Activated CD4-positive, alpha-beta memory T cell treated with anti-CD3 and anti-CD28 coated beads for 36 hours (primary cell): ENCODE measurements at regions of chr10 and their contacts with region 1.

Region 1: GRCh38 chr10:110210674-110211464 is 3.5 kb downstream of the MXI1 start:
- DNase-seq: peak; percentile 96
- H3K4me3 Mint-ChIP-seq: peak overlapping the region; percentile 96
- H3K27ac Mint-ChIP-seq: peak overlapping the region; percentile 91
- H3K4me1 Mint-ChIP-seq: peaks cover 54% of the 10 kb centered on the region
- H3K27me3 Mint-ChIP-seq: peaks cover 1% of the 10 kb centered on the region

Region 2: GRCh38 chr10:109922976-109923921 is 287.6 kb before region 1 on chr10 and contains the start of gene XPNPEP1:
- CTCF ChIA-PET with region 1: interaction called, 3 read pairs
- POLR2A ChIA-PET with region 1: no interaction called
- intact Hi-C with region 1: loop called (anchors 5 kb)
- DNase-seq: peak; percentile 90
- H3K4me3 Mint-ChIP-seq: peak within 1 kb of the TSS; percentile 90
- H3K27ac Mint-ChIP-seq: peak within 1 kb of the TSS; percentile 93
- H3K4me1 Mint-ChIP-seq: peaks cover 56% of the 10 kb centered on the region
- H3K27me3 Mint-ChIP-seq: no peaks in the 10 kb centered on the region
- total RNA-seq, gene XPNPEP1: 66.4 to 66.6 TPM

Region 3: DNA sequence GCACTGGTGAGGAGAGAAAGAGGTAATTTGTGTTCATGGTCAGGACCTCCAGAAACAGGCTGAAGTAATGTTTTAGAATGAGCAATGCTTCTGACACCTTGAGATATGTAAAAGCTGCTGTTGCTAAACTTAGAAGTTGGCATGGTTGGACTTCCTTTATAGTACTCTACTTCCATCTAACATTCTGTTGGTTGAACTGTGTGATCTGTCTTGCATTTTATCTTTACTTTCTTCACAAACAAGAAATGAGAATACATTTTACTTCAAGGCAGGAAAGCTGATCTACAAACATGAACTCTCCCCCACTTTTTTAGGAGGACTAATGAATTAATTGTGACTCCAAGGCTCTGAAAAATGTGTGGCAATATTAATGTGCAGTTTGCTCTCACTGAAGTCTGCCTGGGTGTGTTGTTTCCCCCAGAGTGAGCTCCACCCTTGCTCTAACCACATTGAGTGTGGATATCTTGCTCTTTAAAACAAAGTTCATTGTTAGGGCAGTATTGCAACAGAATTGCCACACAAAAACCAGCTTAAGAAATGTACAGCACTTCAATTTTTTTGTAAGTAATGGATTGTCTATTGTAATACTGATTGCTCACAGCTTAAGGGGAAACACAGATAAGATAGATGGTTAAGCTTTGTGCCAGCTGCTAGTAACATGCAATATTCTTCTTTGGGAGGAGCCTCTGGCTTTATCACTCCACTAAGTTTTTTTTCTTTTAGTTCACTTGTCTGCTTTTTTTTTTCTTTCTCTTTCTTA is 134.1 kb before region 1 on chr10:
- CTCF ChIA-PET with region 1: no interaction called
- POLR2A ChIA-PET with region 1: interaction called, 10 read pairs
- intact Hi-C with region 1: no loop called
- DNase-seq: no peak
- H3K4me3 Mint-ChIP-seq: peak overlapping the region; percentile 81
- H3K27ac Mint-ChIP-seq: peak overlapping the region; percentile 98
- H3K4me1 Mint-ChIP-seq: peaks cover 84% of the 10 kb centered on the region
- H3K27me3 Mint-ChIP-seq: no peaks in the 10 kb centered on the region

Region 4: DNA sequence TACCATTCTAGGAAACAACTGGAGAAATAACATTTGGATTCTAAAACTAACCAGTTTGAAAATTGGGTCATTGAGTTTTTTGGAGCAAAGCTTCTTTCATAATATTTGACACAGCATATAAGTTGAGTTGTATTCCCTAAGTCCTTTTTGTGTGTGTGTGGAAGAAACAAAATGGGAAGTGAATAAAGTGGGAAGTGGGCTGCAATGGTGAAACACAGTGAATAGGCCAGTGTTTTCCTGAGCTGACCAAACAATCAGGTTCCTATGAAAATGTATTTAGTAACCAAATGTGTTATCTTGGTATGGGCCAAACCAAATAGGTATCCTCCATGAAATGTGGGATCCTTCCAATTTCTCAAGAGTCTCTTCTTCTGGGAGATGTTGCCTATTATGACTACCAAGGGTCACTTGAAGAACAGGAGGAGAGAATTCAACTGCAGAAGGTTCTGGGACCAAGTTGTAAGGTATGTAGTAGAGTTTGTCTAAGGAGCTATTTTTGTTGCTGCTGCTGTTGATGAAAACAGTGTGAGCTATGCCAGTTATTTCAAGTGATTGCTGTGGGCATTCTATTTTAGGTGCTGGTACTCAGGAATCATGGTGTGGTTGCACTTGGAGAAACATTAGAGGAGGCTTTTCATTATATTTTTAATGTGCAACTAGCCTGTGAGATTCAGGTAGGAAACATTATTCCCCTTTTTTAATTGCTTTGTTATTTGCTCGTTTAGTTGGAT is 91.8 kb before region 1 on chr10:
- CTCF ChIA-PET with region 1: no interaction called
- POLR2A ChIA-PET with region 1: no interaction called
- intact Hi-C with region 1: no loop called
- DNase-seq: no peak
- H3K4me3 Mint-ChIP-seq: no peak overlapping the region
- H3K27ac Mint-ChIP-seq: peak overlapping the region; percentile 21
- H3K4me1 Mint-ChIP-seq: peaks cover 5% of the 10 kb centered on the region
- H3K27me3 Mint-ChIP-seq: no peaks in the 10 kb centered on the region

Region 5: DNA sequence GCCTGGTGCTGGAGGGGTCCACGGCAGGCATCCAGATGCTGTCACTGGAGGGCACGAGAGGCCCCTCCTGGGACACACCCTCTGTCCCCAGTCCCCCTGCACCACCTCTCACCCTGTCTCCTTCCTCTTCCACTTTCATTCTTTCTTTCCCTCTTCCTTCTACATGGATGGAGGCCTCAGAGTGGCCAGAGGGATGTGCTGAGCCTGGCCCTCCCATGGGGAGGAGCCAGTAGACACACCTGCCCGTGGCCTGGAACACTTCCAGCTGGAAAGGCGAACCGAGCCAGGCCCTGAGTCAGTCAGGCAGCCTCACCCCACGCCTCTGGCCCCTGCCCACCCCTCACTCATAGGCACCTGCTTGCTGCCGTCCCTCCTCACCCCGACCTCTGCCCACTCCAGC is 59.4 kb before region 1 on chr10:
- CTCF ChIA-PET with region 1: interaction called, 5 read pairs
- POLR2A ChIA-PET with region 1: interaction called, 3 read pairs
- intact Hi-C with region 1: loop called (anchors 2 kb)
- DNase-seq: no peak
- H3K4me3 Mint-ChIP-seq: no peak overlapping the region
- H3K27ac Mint-ChIP-seq: no peak overlapping the region
- H3K4me1 Mint-ChIP-seq: peaks cover 7% of the 10 kb centered on the region
- H3K27me3 Mint-ChIP-seq: peaks cover 48% of the 10 kb centered on the region

Region 6: GRCh38 chr10:110252151-110252550 is 41.3 kb after region 1 on chr10:
- CTCF ChIA-PET with region 1: interaction called, 4 read pairs
- POLR2A ChIA-PET with region 1: interaction called, 4 read pairs
- intact Hi-C with region 1: loop called (anchors 2 kb)
- DNase-seq: no peak
- H3K4me3 Mint-ChIP-seq: no peak overlapping the region
- H3K27ac Mint-ChIP-seq: no peak overlapping the region
- H3K4me1 Mint-ChIP-seq: peaks cover 43% of the 10 kb centered on the region
- H3K27me3 Mint-ChIP-seq: peaks cover 7% of the 10 kb centered on the region

Region 7: DNA sequence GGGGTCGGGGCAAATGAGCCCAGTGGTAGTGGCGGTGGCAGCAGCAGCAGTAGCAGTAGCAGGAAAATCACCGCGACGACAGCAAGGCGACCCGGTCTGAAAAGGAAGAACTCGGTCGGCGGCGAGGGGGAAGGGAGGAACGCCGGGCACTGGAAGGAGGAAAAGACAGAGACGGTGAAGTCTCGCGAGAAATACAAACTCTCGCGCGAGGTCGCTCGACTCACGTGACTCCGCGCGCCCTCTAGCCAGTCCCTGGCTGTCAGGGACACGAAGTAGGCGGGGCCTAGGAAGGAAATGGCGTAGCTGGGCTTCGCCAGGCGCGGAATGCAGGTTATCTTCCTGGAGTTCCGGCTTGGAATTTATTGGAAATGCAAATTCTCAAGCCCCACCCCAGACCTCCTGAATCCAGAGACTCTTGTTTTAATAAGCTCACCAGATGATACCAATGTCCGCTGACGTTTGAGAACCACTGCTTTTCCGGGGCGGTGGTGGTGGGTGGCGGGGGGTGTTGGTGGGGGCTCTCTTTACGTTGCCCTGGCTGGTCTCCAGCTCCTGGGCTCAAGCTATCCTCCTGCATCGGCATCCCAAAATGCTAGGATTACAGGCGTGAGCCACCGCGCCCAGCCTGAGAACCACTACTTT is 94.0 kb after region 1 on chr10 and contains the start of gene SMNDC1:
- CTCF ChIA-PET with region 1: interaction called, 12 read pairs
- POLR2A ChIA-PET with region 1: interaction called, 4 read pairs
- intact Hi-C with region 1: loop called (anchors 1 kb)
- DNase-seq: peak; percentile 99
- H3K4me3 Mint-ChIP-seq: peak within 1 kb of the TSS; percentile 93
- H3K27ac Mint-ChIP-seq: peak within 1 kb of the TSS; percentile 97
- H3K4me1 Mint-ChIP-seq: peaks cover 49% of the 10 kb centered on the region
- H3K27me3 Mint-ChIP-seq: no peaks in the 10 kb centered on the region
- total RNA-seq, gene SMNDC1: 44.1 to 48.3 TPM

Region 8: GRCh38 chr10:110918643-110919363 is 707.9 kb after region 1 on chr10 and contains the start of gene BBIP1:
- CTCF ChIA-PET with region 1: no interaction called
- POLR2A ChIA-PET with region 1: no interaction called
- intact Hi-C with region 1: loop called (anchors 2 kb)
- DNase-seq: no peak
- H3K4me3 Mint-ChIP-seq: peak within 1 kb of the TSS; percentile 92
- H3K27ac Mint-ChIP-seq: peak within 1 kb of the TSS; percentile 99
- H3K4me1 Mint-ChIP-seq: peaks cover 39% of the 10 kb centered on the region
- H3K27me3 Mint-ChIP-seq: no peaks in the 10 kb centered on the region
- total RNA-seq, gene BBIP1: 36.4 to 43.9 TPM